ENCODE measurements at regions of chr9 and their contacts with region 1.

Region 1: DNA sequence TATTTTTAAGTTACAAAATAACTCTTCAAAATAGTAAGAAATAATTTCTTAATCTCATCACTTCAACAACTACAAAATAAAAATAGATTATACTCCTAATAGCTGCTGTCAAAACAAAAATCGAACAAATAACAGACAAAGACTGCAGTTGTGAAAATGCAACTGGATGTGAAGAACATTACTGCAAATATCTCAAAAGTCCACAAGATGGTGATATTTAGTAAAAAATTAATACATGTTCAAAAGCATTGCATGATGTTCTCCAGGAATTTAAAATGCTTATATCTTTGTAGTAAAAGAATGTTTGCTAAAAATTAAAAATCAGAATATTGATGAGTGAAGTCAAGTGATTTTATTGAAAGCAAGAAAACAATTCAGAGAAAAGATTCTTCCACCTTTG is 66.2 kb downstream of the MPDZ start:
- DNase-seq: peak; percentile 3
- ATAC-seq: no peak
- H3K4me3 ChIP-seq: no peak overlapping the region
- H3K27ac ChIP-seq: no peak overlapping the region
- H3K4me1 ChIP-seq: no peaks in the 10 kb centered on the region
- H3K27me3 ChIP-seq: no peaks in the 10 kb centered on the region
- CTCF ChIP-seq: no peak
- EP300 ChIP-seq: no peak
- POLR2A ChIP-seq: no peak
- RAD21 ChIP-seq: no peak

Region 2: DNA sequence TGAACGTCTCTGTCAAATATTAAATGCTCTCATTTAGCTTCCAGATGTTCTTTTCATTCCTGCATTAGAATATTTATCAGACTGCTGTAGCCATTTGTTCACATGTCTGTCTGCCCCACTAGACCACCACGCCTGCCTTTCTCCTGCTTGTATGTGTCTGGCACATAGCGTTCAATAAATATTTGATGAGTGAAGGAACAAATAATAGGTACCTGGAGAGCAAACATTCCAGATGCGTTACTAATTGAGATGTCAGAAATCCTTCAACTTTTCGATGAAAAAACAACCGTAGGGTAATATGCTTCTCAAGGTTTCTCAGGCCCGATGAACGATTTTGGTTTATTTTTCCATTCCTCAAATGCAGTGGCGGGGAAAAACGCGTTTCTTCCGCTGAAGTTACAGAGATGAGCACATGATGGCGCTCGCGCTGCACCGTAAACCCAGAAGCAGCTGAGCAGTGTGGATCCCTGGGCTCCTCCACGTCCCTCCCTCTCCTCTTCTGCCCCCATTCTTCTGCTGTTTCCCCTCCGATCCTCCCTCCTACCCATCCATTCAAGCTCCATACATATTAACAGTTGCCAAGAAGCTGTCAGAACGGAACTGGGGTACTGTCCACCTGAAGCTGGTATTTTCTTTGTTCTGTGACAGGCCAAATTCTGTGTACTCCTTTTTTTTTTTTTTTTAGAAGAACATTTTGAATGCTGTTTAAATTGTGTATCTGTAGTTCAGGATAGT is 179.2 kb before region 1 on chr9:
- CTCF ChIA-PET with region 1: no interaction called
- POLR2A ChIA-PET with region 1: no interaction called
- in situ Hi-C with region 1: no loop called
- intact Hi-C with region 1: no loop called
- DNase-seq: peak; percentile 38
- ATAC-seq: peak; percentile 97
- H3K4me3 ChIP-seq: 0 out of 6 replicates have a peak overlapping the region, but pooled peaks of 1 of the 3 experiments have one; percentile 12
- H3K27ac ChIP-seq: no peak overlapping the region
- H3K4me1 ChIP-seq: peaks cover 12% of the 10 kb centered on the region
- H3K27me3 ChIP-seq: no peaks in the 10 kb centered on the region
- CTCF ChIP-seq: peak; percentile 90
- EP300 ChIP-seq: 0 out of 4 replicates have a peak, but pooled peaks of 1 of the 2 experiments have one; percentile 4
- POLR2A ChIP-seq: no peak
- RAD21 ChIP-seq: peak; percentile 57

Region 3: GRCh38 chr9:13279284-13280141 is 66.2 kb after region 1 on chr9 and contains the start of gene MPDZ:
- CTCF ChIA-PET with region 1: no interaction called
- POLR2A ChIA-PET with region 1: no interaction called
- in situ Hi-C with region 1: no loop called
- intact Hi-C with region 1: loop called (anchors 2 kb)
- DNase-seq: peak; percentile 31
- ATAC-seq: peak; percentile 89
- H3K4me3 ChIP-seq: peak within 1 kb of the TSS; percentile 71 to 91 (median 81)
- H3K27ac ChIP-seq: peak within 1 kb of the TSS; percentile 66
- H3K4me1 ChIP-seq: peaks cover 19% of the 10 kb centered on the region
- H3K27me3 ChIP-seq: no peaks in the 10 kb centered on the region
- CTCF ChIP-seq: no peak
- EP300 ChIP-seq: no peak
- POLR2A ChIP-seq: peak; percentile 35 to 51; a peak in 1 of 4 replicates
- RAD21 ChIP-seq: 0 out of 2 replicates have a peak, but pooled peaks have one; percentile 16
- total RNA-seq, gene MPDZ: 11.1 and 14.7 TPM in 2 replicates

Region 4: GRCh38 chr9:13351778-13352386 is 138.5 kb after region 1 on chr9:
- CTCF ChIA-PET with region 1: no interaction called
- POLR2A ChIA-PET with region 1: no interaction called
- in situ Hi-C with region 1: no loop called
- intact Hi-C with region 1: loop called (anchors 10 kb)
- DNase-seq: peak; percentile 23
- ATAC-seq: no peak
- H3K4me3 ChIP-seq: no peak overlapping the region
- H3K27ac ChIP-seq: no peak overlapping the region
- H3K4me1 ChIP-seq: no peaks in the 10 kb centered on the region
- H3K27me3 ChIP-seq: no peaks in the 10 kb centered on the region
- CTCF ChIP-seq: peak; percentile 49; the same call in 1 of the 2 replicates
- EP300 ChIP-seq: no peak
- POLR2A ChIP-seq: no peak
- RAD21 ChIP-seq: no peak

Region 5: DNA sequence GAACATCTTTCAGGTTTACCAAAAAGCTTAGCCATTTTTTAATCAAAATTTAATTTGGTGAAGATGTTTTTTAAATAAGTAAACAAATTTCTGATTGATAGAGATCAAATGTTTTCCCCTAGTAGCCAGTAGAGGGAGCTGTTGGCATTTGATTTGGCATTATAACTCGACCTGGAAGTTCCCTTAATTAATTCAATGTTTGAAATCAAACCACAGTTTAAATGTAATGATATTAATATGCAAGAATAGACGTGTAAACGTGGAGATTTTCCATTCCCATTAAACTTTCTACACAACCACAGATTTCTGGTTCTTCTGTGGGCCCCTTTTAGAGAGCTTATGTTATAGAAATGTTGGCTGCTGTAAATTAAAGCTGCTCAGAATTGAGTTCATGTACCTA is 214.2 kb after region 1 on chr9:
- CTCF ChIA-PET with region 1: no interaction called
- POLR2A ChIA-PET with region 1: no interaction called
- in situ Hi-C with region 1: no loop called
- intact Hi-C with region 1: loop called (anchors 10 kb)
- DNase-seq: peak; percentile 14
- ATAC-seq: no peak
- H3K4me3 ChIP-seq: no peak overlapping the region
- H3K27ac ChIP-seq: no peak overlapping the region
- H3K4me1 ChIP-seq: no peaks in the 10 kb centered on the region
- H3K27me3 ChIP-seq: no peaks in the 10 kb centered on the region
- CTCF ChIP-seq: peak; percentile 49
- EP300 ChIP-seq: no peak
- POLR2A ChIP-seq: no peak
- RAD21 ChIP-seq: no peak

Region 6: GRCh38 chr9:13688994-13689600 is 475.8 kb after region 1 on chr9:
- CTCF ChIA-PET with region 1: no interaction called
- POLR2A ChIA-PET with region 1: no interaction called
- in situ Hi-C with region 1: no loop called
- intact Hi-C with region 1: loop called (anchors 5 kb)
- DNase-seq: no peak
- ATAC-seq: no peak
- H3K4me3 ChIP-seq: no peak overlapping the region
- H3K27ac ChIP-seq: no peak overlapping the region
- H3K4me1 ChIP-seq: no peaks in the 10 kb centered on the region
- H3K27me3 ChIP-seq: no peaks in the 10 kb centered on the region
- CTCF ChIP-seq: 0 out of 2 replicates have a peak, but pooled peaks have one; percentile 11
- EP300 ChIP-seq: no peak
- POLR2A ChIP-seq: no peak
- RAD21 ChIP-seq: no peak

Measured in HepG2 (cell line).